ENCODE measurements at regions of chr4 and their contacts with region 1.

Region 1: DNA sequence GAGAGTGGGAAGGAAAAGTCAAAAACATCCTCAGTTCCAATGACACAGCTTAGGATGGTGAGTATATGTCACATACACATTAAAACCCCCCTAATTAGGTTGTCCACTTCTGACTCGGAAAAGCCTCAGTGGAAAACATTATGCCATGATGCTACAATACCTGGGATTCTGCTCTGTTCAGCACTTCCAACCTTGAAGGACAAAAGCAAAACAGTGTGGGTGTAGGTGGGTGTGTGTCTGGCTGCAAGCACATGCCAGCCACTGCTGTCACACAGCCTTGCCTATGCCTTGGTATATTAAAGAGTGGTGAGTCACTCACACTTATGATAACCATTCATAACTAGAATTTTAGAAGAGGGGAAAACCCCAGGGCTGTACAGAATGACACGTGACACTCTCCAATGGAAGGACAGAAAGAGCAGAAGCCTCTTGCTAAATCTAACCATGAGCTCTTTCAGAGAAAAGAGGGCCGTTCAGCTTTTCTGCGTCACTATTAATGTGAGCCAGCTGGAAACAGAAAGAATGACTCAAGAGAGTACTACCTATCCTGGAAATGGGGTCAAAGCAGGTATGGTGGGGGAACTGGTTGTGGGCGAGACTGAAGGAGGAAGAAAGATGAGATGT is 159.6 kb downstream of the TET2 start:
- DNase-seq: peak; percentile 83
- H3K4me3 Mint-ChIP-seq: peak overlapping the region; percentile 30
- H3K27ac Mint-ChIP-seq: peak overlapping the region; percentile 92
- H3K4me1 Mint-ChIP-seq: peaks cover 25% of the 10 kb centered on the region
- H3K27me3 Mint-ChIP-seq: no peaks in the 10 kb centered on the region

Region 2: DNA sequence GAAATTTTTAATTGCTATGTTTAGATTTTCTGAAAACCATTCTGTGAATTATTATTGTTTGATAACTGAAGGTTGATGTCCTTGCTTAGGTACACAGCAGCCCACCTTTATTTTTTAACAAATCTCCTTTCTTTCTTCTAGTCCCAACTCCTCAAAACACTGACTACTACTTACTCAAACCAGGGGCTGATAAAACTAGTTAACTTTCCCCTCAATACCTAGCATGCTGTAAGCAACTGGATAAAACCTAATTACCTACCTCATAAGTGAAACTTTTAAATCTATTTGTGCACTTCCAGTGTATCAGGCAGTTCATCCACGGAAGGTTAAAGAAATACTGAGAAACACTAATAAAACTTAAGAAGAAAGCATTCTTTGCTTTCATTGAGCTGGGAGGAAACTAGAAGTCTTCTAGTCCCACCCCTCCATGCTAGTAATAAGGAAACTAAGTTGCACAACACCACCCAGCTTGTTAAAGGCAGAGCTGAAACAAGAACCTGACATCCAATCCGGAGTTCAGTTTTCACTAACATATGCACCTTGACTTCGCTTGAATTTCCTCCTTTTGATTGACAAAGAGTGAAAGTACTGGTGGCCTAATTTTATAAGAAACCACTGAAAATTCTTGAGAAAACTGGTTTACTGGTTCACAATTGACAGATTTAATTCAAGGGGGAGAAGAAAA is 339.8 kb before region 1 on chr4:
- CTCF ChIA-PET with region 1: no interaction called
- POLR2A ChIA-PET with region 1: no interaction called
- intact Hi-C with region 1: loop called (anchors 1 kb)
- DNase-seq: peak; percentile 47
- H3K4me3 Mint-ChIP-seq: peak overlapping the region; percentile 48
- H3K27ac Mint-ChIP-seq: peak overlapping the region; percentile 79
- H3K4me1 Mint-ChIP-seq: peaks cover 15% of the 10 kb centered on the region
- H3K27me3 Mint-ChIP-seq: peaks cover 5% of the 10 kb centered on the region

Region 3: GRCh38 chr4:105146276-105147015 is 159.8 kb before region 1 on chr4 and contains the start of gene TET2:
- CTCF ChIA-PET with region 1: no interaction called
- POLR2A ChIA-PET with region 1: interaction called, 13 read pairs
- intact Hi-C with region 1: loop called (anchors 1 kb)
- DNase-seq: peak; percentile 88
- H3K4me3 Mint-ChIP-seq: peak within 1 kb of the TSS; percentile 99
- H3K27ac Mint-ChIP-seq: peak within 1 kb of the TSS; percentile 99
- H3K4me1 Mint-ChIP-seq: peaks cover 35% of the 10 kb centered on the region
- H3K27me3 Mint-ChIP-seq: no peaks in the 10 kb centered on the region
- total RNA-seq, gene TET2: 30.2 to 30.6 TPM

Region 4: DNA sequence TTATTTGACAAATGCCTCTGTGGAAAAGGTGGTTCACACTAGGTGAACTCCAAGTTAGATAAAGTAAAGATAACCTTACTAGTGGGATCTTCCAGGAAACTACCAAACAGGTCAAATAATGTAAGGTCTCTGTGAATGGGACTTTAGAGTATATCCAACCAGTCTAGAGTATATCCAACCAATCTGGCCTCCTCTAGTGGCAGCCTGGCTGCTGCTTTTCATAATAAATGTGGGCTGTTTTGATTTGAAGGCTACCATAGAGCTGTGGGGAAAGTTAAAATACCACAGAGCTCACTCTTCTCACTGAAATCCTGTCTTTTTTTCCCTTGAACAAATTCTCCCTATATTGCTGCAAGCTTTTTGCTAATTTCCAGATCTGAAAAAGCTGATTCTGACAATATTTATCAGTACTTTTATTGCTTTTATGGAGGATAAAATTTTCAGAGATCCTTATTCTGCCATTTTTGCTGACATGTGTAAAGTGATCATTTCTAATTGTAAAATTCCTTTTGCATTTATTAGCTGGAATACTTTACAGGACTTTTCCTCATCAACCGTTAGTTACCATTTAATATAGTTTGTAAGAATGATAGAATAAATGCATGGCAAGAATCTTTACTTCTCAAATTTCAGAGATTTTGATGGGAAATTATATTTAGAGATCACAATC is 48.3 kb before region 1 on chr4:
- CTCF ChIA-PET with region 1: no interaction called
- POLR2A ChIA-PET with region 1: no interaction called
- intact Hi-C with region 1: no loop called
- DNase-seq: no peak
- H3K4me3 Mint-ChIP-seq: no peak overlapping the region
- H3K27ac Mint-ChIP-seq: no peak overlapping the region
- H3K4me1 Mint-ChIP-seq: no peaks in the 10 kb centered on the region
- H3K27me3 Mint-ChIP-seq: no peaks in the 10 kb centered on the region

Region 5: GRCh38 chr4:105274504-105274903 is 31.8 kb before region 1 on chr4:
- CTCF ChIA-PET with region 1: interaction called, 3 read pairs
- POLR2A ChIA-PET with region 1: interaction called, 5 read pairs
- intact Hi-C with region 1: loop called (anchors 1 kb)
- DNase-seq: no peak
- H3K4me3 Mint-ChIP-seq: no peak overlapping the region
- H3K27ac Mint-ChIP-seq: peak overlapping the region; percentile 57
- H3K4me1 Mint-ChIP-seq: peaks cover 46% of the 10 kb centered on the region
- H3K27me3 Mint-ChIP-seq: no peaks in the 10 kb centered on the region

Region 6: GRCh38 chr4:105453550-105454205 is 147.4 kb after region 1 on chr4:
- CTCF ChIA-PET with region 1: no interaction called
- POLR2A ChIA-PET with region 1: no interaction called
- intact Hi-C with region 1: loop called (anchors 1 kb)
- DNase-seq: peak; percentile 51
- H3K4me3 Mint-ChIP-seq: no peak overlapping the region
- H3K27ac Mint-ChIP-seq: peak overlapping the region; percentile 69
- H3K4me1 Mint-ChIP-seq: peaks cover 38% of the 10 kb centered on the region
- H3K27me3 Mint-ChIP-seq: no peaks in the 10 kb centered on the region

Measured in activated CD4-positive, alpha-beta memory T cell treated with anti-CD3 and anti-CD28 coated beads for 36 hours (primary cell).